IMR-90 (cell line): ENCODE measurements at regions of chr20 and their contacts with region 1.

Region 1: DNA sequence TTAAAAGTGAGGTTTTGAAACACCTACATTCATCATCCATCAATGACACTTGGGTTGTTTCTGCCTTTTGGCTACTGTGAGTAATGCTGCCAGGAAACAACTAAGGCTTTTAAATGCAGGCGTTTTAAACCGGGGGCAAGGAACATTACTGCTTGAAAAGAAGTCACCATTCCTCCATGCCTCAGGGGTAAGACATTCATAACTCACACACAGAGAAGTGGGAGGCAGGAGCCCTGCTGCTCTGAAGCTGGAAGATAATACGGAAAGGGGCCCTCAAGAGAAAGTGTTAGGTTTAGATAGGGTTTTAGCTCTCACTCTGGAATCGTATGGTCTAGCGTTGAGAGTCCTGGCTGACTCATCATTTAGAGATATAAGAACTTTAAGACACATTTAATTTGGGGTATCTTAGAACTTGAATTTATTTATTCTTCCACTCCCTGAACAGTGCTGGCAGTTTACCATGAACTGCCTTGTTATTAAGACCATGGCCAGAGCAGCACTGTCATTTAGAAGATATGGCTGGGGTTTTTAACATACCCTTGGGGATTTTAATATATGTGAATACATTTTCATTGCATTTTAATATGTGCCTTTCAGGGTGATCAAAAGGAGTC is 1.8 kb downstream of the TUBB1 start:
- DNase-seq: peak; percentile 56
- ATAC-seq: peak; percentile 76
- H3K4me3 ChIP-seq: no peak overlapping the region
- H3K27ac ChIP-seq: peak overlapping the region; percentile 12; the same call in 1 of the 2 replicates
- H3K4me1 ChIP-seq: peaks cover 3% of the 10 kb centered on the region; the same call in 1 of the 2 replicates
- H3K27me3 ChIP-seq: no peaks in the 10 kb centered on the region
- CTCF ChIP-seq: no peak
- POLR2A ChIP-seq: no peak
- RAD21 ChIP-seq: no peak

Region 2: DNA sequence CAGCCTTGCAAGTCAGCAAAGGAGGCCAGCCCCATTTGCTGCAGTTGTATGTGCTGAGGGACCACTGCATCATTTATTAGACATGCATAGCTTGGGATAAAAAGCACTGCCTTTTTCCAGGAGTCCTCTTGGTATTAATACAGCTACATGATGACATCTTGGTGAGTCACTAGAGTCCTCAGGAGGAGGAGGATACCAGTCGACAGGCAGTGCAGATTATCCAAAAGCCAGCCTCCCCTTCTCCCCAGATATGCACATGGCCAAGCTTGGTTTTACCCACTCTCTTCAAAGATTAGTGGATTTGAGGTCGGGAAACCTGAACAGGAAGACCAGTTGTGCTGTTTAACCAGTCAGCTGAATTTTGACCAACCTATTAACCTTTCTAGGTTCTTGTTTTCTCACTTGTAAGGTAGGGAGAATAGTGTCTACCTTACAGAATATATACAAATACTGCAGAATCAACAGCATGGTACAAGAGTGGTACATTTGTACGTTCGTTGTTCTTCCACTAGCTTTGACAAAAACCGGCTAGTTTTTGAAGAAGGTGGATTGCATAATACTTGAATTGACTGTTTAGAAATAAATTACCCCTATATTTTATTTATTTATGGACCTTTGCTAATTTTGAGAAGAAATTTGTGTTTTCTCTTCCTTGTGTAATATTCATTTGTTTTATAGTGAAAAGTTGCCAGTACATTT is 600.1 kb before region 1 on chr20:
- CTCF ChIA-PET with region 1: no interaction called
- POLR2A ChIA-PET with region 1: no interaction called
- dilution Hi-C with region 1: no loop called
- in situ Hi-C with region 1: no loop called
- intact Hi-C with region 1: no loop called
- DNase-seq: peak; percentile 86
- ATAC-seq: peak; percentile 88
- H3K4me3 ChIP-seq: no peak overlapping the region
- H3K27ac ChIP-seq: no peak overlapping the region
- H3K4me1 ChIP-seq: peaks cover 6% of the 10 kb centered on the region
- H3K27me3 ChIP-seq: no peaks in the 10 kb centered on the region
- CTCF ChIP-seq: no peak
- POLR2A ChIP-seq: no peak
- RAD21 ChIP-seq: no peak

Region 3: DNA sequence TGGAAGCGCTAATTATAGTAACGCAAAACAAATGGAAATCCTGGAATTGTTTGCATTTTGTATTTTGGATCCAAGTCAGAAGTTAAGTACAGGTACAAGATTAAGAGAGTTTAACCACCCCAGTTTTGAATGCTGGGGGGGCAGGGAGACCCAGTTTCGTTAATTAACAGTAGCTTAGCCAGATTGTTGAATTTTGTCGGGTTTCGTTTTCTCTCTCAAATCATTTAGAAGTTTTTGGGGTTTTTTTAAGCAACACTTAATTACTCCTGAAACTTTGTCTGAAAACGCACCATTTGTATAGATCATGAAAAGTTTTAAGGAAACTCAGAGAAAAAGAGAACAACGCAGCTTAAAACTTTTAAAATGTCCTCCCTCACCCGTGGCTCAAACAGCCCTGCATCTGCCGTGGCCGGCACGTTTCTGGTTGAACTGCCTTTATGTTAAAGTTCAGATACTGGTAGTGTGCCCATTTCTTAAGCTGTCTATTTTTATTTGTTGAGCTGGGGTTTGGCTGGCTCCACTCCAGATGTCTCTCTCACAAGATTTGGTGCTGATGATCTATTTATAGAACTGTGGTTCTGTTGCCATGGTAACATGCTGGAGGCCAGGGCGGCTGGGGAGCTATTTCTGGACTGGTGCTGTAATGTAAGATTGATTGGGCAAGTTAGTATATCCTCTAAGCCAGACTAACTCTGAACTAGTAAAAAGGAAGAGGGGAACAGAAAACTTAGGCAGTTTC is 113.5 kb before region 1 on chr20:
- CTCF ChIA-PET with region 1: no interaction called
- POLR2A ChIA-PET with region 1: no interaction called
- dilution Hi-C with region 1: no loop called
- in situ Hi-C with region 1: loop called (anchors 10 kb)
- intact Hi-C with region 1: no loop called
- DNase-seq: peak; percentile 99
- ATAC-seq: peak; percentile 74
- H3K4me3 ChIP-seq: no peak overlapping the region
- H3K27ac ChIP-seq: no peak overlapping the region
- H3K4me1 ChIP-seq: peaks cover 12% of the 10 kb centered on the region
- H3K27me3 ChIP-seq: no peaks in the 10 kb centered on the region
- CTCF ChIP-seq: no peak
- POLR2A ChIP-seq: peak; percentile 68
- RAD21 ChIP-seq: no peak

Region 4: DNA sequence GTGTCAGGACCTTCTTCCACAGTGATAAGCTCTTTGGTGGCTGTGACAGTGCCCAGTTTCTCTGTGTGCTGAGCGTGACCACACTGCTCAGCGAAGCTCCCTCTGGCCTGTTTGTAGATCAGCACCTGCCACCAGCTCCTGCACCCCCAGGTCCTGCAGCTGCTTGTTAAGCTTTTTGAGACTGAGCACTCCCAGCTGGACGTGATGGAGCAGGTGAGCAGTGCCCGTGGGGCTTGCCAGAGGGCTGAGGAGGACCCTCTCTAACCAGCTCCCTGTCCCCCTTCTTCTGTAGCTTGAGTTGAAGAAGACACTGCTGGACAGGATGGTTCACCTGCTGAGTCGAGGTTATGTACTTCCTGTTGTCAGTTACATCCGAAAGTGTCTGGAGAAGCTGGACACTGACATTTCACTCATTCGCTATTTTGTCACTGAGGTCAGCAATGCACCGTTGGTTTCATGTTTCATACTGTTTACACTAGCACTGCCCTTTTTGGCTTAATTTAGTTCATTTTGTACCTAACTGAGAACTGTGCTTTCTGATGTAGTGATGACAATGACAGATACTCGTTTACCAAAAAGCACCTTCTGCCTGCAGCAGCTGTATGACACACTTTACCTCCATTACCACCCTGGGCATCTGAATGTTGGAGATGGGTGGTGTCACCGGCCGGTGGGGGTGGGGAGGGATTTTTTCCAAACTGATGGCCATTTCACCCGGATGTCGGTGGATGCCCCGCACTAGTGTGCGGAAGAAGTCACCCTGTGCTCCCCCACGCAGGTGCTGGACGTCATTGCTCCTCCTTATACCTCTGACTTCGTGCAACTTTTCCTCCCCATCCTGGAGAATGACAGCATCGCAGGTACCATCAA is 27.5 kb before region 1 on chr20:
- CTCF ChIA-PET with region 1: interaction called, 3 read pairs
- POLR2A ChIA-PET with region 1: interaction called, 21 read pairs
- dilution Hi-C with region 1: no loop called
- in situ Hi-C with region 1: no loop called
- intact Hi-C with region 1: loop called (anchors 5 kb)
- DNase-seq: no peak
- ATAC-seq: no peak; the same call in 1 of the 2 replicates
- H3K4me3 ChIP-seq: no peak overlapping the region
- H3K27ac ChIP-seq: no peak overlapping the region
- H3K4me1 ChIP-seq: peaks cover 6% of the 10 kb centered on the region; the same call in 1 of the 2 replicates
- H3K27me3 ChIP-seq: no peaks in the 10 kb centered on the region
- CTCF ChIP-seq: no peak
- POLR2A ChIP-seq: no peak
- RAD21 ChIP-seq: no peak

Region 5: GRCh38 chr20:59055295-59055694 is 34.2 kb after region 1 on chr20:
- CTCF ChIA-PET with region 1: no interaction called
- POLR2A ChIA-PET with region 1: no interaction called
- dilution Hi-C with region 1: no loop called
- in situ Hi-C with region 1: no loop called
- intact Hi-C with region 1: no loop called
- DNase-seq: peak; percentile 37
- ATAC-seq: peak; percentile 60
- H3K4me3 ChIP-seq: no peak overlapping the region
- H3K27ac ChIP-seq: no peak overlapping the region
- H3K4me1 ChIP-seq: no peaks in the 10 kb centered on the region
- H3K27me3 ChIP-seq: peaks cover 19% of the 10 kb centered on the region
- CTCF ChIP-seq: peak; percentile 52
- POLR2A ChIP-seq: no peak
- RAD21 ChIP-seq: peak; percentile 54

Region 6: DNA sequence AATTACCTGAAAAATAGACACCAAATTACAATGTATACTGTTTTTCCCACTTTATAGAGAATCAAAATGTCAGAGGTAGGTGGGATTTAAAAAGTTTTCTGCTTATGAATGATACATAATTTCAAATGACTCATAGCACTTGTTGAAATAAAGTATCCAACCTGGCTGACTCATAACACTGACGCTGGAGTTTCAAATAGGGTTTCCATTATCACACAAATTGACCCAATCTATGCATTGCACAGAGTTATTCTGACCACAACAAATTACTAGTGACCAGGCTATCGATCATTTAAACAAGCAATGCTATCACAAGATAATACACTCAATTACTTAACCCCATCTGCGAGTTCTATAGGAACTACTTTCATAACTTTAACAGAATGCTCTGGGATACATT is 53.4 kb after region 1 on chr20:
- CTCF ChIA-PET with region 1: no interaction called
- POLR2A ChIA-PET with region 1: no interaction called
- dilution Hi-C with region 1: no loop called
- in situ Hi-C with region 1: no loop called
- intact Hi-C with region 1: no loop called
- DNase-seq: peak; percentile 79
- ATAC-seq: no peak
- H3K4me3 ChIP-seq: no peak overlapping the region
- H3K27ac ChIP-seq: no peak overlapping the region
- H3K4me1 ChIP-seq: no peaks in the 10 kb centered on the region
- H3K27me3 ChIP-seq: peaks cover 20% of the 10 kb centered on the region
- CTCF ChIP-seq: no peak
- POLR2A ChIP-seq: no peak
- RAD21 ChIP-seq: no peak

Region 7: DNA sequence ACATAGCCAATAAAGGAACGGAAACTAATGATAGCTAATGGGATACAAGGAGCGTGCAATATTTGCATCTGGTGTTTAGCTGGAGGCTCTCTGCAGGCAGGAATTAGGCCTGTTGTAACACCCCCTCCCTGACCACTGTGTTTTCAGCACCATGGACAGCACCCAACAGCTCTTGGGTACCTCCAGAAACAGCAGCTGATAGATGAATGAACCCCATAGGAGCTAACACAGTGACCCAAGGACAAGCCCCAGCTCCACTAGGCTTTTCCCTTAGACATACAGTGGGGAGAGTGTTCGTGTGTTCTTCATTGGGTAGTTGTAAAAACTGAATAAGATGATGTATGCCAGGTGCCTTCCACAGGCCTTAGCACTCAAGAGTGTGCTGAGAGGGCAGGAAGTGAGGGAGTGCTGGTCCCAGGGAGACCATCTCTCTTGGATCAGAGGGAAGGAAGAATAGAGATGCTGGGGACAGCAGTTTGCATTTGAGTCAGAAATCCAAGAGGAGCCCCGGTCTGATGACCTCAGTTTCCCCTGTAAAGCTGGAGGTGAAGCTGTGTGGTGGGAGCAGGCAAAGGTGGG is 744.6 kb after region 1 on chr20:
- CTCF ChIA-PET with region 1: no interaction called
- POLR2A ChIA-PET with region 1: no interaction called
- dilution Hi-C with region 1: no loop called
- in situ Hi-C with region 1: no loop called
- intact Hi-C with region 1: no loop called
- DNase-seq: no peak
- ATAC-seq: no peak
- H3K4me3 ChIP-seq: no peak overlapping the region
- H3K27ac ChIP-seq: no peak overlapping the region
- H3K4me1 ChIP-seq: no peaks in the 10 kb centered on the region
- H3K27me3 ChIP-seq: no peaks in the 10 kb centered on the region
- CTCF ChIP-seq: no peak
- POLR2A ChIP-seq: no peak
- RAD21 ChIP-seq: no peak